ENCODE measurements at regions of chr6 and their contacts with region 1.

Region 1: DNA sequence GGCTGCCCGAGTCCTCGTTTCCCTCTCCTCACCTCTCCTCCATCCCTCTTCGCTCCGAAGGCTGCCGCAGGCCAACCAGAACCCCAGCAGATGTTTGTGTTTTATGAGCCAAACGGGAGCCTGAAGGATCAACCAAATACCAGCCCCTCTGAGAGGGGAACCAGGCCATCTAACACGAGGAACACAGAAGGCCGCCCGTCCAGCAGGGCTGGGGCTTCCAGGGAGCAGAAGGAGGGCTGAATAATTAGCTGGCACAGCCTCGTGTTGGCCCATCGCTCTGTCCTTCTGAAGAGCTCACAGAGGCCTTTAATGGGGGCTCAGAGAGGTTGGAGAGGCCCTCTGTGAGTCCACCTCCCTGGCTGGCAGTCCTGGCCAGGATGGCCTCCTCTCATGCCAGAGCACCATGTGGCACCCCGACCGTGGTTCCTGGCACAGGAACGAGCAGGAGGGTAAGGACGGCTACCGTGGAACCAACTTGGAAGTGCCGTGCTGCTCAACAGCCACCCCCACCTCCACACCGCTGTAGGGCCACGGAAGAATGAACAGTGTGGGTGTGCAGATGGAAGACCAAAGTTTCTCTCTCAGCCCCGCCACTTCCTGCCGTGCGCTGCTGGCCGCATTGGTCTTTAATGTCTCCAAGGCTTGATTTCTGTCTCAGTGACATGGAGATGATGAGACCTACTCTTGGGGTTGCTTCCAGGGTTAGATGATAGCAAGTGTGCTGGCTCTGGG is 155.2 kb downstream of the SCML4 start:
- DNase-seq: no peak
- H3K4me3 Mint-ChIP-seq: no peak overlapping the region
- H3K27ac Mint-ChIP-seq: no peak overlapping the region
- H3K4me1 Mint-ChIP-seq: peaks cover 34% of the 10 kb centered on the region
- H3K27me3 Mint-ChIP-seq: no peaks in the 10 kb centered on the region
- CTCF ChIP-seq: no peak

Region 2: GRCh38 chr6:107154131-107154800 is 514.6 kb before region 1 on chr6:
- CTCF ChIA-PET with region 1: no interaction called
- intact Hi-C with region 1: loop called (anchors 10 kb)
- DNase-seq: peak; percentile 81
- H3K4me3 Mint-ChIP-seq: peak overlapping the region; percentile 51
- H3K27ac Mint-ChIP-seq: peak overlapping the region; percentile 93
- H3K4me1 Mint-ChIP-seq: peaks cover 50% of the 10 kb centered on the region
- H3K27me3 Mint-ChIP-seq: no peaks in the 10 kb centered on the region
- CTCF ChIP-seq: no peak

Region 3: DNA sequence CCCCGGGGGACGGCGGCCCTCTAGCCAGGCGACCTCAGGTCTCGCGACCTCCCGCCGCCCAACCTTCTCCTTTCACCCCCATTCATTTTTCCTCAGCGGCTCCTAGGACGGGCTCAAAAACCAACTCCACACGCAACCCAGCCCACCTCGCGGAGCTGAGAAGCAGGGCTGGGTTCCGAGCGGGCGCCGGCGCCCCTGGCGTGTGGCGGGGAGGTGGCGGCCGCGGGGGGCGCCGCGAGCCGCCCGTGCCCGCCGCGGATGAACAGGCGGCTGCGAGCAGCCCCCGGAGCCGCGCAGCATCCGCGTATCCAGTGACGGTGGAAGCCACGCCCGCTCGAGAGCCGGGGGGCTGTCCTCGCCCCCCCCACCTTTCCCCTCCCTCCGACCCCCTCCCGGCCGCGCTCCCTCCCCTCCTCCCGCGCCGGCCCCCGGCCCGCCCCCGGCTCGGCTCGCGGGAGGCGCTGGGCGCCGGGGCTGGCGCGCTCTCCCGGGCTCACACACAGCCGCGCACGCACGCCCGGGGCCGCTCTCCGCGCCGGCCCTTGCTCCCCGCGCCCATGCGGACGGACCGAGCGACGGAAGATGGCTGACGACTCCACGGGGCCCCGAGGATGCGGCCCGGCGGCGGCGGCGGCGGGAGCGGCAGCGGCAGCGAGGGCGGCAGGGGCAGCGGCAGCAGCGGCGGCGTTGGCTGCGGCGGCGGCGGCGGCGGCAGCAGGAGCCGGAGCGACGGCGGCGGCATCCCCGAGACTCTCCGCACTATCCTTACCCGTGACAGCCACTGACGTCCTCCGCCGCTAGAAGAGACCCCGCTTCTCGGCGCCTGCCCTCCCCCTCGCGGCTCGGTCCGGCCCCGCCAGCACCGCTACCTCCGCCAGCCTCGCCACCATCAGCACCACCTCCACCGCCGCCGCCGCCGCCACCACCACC is 179.0 kb before region 1 on chr6 and contains the start of gene SOBP:
- CTCF ChIA-PET with region 1: no interaction called
- intact Hi-C with region 1: loop called (anchors 10 kb)
- DNase-seq: peak; percentile 41
- H3K4me3 Mint-ChIP-seq: peak within 1 kb of the TSS; percentile 89
- H3K27ac Mint-ChIP-seq: peak within 1 kb of the TSS; percentile 42
- H3K4me1 Mint-ChIP-seq: peaks cover 9% of the 10 kb centered on the region
- H3K27me3 Mint-ChIP-seq: peaks cover 36% of the 10 kb centered on the region
- CTCF ChIP-seq: no peak
- total RNA-seq, gene SOBP: 1.6 and 1.7 TPM in 2 replicates

Region 4: GRCh38 chr6:107877968-107878367 is 209.1 kb after region 1 on chr6:
- CTCF ChIA-PET with region 1: no interaction called
- intact Hi-C with region 1: no loop called
- DNase-seq: no peak
- H3K4me3 Mint-ChIP-seq: no peak overlapping the region
- H3K27ac Mint-ChIP-seq: no peak overlapping the region
- H3K4me1 Mint-ChIP-seq: no peaks in the 10 kb centered on the region
- H3K27me3 Mint-ChIP-seq: no peaks in the 10 kb centered on the region
- CTCF ChIP-seq: no peak

Measured in Calu3 (cell line).